ENCODE measurements at regions of chr10 and their contacts with region 1.

Region 1: DNA sequence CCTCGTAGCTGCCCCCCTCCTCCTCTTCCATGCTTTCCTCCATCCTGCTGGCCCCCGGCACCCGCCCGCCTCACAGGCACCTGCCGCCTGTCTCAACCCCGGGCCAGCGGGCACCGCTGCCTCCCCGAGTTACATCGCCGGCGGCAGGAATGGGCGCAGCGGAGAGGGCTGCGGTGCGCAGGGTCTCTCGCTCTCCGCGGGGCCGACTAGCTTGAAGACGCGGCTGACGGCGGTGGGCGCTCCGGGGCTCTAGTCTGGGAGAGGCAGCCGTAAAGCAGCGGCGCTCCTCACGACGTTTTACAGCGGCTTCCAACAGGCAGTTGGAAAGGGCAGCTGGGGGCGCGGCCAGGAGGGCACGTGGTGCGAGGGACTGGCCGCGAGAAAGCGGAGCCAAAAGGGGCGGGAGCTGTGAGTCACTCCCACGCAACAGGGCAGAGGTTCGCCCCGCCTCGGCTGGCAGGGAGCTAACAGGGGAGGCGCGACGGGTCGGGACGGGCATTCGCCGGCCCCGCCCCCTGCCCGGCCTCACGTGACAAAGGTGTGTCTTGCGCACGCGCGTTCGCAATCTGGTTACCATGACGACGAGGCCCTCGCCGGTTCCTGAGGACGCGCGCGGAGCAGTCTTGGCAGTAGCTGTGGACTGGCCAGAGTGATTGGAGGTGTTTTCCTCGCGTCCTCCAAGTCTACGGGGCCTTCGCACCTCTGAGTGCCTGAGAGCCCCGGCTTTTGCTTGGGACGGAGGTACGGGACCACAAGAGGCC is at the start of gene CACUL1:
- DNase-seq: peak; percentile 99
- ATAC-seq: peak; percentile 98
- H3K4me3 Mint-ChIP-seq: peak within 1 kb of the TSS; percentile 91
- H3K27ac Mint-ChIP-seq: peak within 1 kb of the TSS; percentile 78
- H3K4me1 Mint-ChIP-seq: peaks cover 38% of the 10 kb centered on the region
- H3K27me3 Mint-ChIP-seq: peaks cover 3% of the 10 kb centered on the region
- CTCF ChIP-seq: no peak
- total RNA-seq, gene CACUL1: 19.8 and 27.1 TPM in 2 replicates

Region 2: DNA sequence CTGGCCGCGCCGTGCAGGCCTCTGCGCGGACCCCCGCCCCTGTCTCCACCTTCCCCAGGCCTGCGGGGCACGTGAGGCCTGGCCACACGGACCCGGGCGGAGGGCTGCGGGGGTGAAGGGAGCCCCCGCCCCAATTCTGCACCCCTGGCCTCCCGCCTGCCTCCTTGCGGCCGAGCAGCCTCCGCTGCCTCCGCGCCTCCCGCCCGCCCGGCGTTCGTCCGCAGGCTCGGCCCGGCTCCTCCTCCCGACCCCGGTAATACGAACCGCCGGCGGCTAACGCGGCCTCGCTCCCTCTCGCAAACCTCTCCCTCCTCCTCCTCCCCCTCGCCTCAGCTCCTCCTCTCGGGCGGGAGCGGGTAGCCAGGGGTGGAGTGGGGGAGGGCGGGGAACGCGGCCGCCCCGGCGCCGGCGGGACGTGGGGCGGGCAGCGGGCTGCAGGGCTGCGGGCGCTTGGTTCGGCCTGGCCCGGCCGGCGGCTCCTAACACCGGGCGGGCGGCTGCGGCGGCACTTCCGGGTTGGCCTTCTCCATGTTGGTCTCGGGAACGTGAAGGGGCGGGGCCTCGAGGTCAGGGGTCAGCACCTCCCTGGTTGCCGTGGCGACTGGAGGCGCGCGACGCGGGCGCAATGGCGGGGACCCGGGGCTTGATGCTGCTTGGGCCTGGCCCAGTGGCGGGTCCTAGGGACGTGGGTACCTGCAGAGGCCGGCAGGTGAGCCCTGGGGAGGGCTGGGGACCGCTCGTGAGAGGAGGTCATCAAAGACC is 708.3 kb before region 1 on chr10 and contains the start of gene RAB11FIP2:
- CTCF ChIA-PET with region 1: no interaction called
- POLR2A ChIA-PET with region 1: no interaction called
- intact Hi-C with region 1: loop called (anchors 5 kb)
- DNase-seq: peak; percentile 98
- ATAC-seq: peak; percentile 92
- H3K4me3 Mint-ChIP-seq: peak within 1 kb of the TSS; percentile 89
- H3K27ac Mint-ChIP-seq: peak within 1 kb of the TSS; percentile 66
- H3K4me1 Mint-ChIP-seq: peaks cover 38% of the 10 kb centered on the region
- H3K27me3 Mint-ChIP-seq: no peaks in the 10 kb centered on the region
- CTCF ChIP-seq: no peak
- total RNA-seq, gene RAB11FIP2: 20.4 and 33.2 TPM in 2 replicates

Region 3: DNA sequence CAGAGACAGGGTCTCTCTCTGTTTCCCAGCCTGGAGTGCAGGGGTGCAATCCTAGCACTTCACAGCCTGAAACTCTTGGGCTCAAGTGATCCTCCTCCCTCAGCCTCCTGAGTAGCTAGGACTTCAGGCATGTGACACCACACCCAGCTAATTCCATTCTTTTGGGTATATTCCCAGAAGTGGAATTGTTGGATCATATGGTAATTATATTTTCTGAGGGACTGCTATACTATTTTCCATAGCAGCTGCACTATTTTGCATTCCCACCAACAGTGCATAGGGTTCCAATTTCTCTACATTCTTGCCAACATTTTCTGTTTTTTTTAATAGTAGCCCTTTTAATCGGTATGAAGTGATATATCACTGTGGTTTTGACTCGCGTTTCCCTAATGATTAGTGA is 678.2 kb before region 1 on chr10:
- CTCF ChIA-PET with region 1: no interaction called
- POLR2A ChIA-PET with region 1: no interaction called
- intact Hi-C with region 1: no loop called
- DNase-seq: no peak
- ATAC-seq: no peak
- H3K4me3 Mint-ChIP-seq: no peak overlapping the region
- H3K27ac Mint-ChIP-seq: no peak overlapping the region
- H3K4me1 Mint-ChIP-seq: no peaks in the 10 kb centered on the region
- H3K27me3 Mint-ChIP-seq: peaks cover under 1% of the 10 kb centered on the region
- CTCF ChIP-seq: no peak

Region 4: GRCh38 chr10:118698421-118698820 is 56.5 kb before region 1 on chr10:
- CTCF ChIA-PET with region 1: no interaction called
- POLR2A ChIA-PET with region 1: no interaction called
- intact Hi-C with region 1: loop called (anchors 1 kb)
- DNase-seq: no peak
- ATAC-seq: peak; percentile 95
- H3K4me3 Mint-ChIP-seq: no peak overlapping the region
- H3K27ac Mint-ChIP-seq: no peak overlapping the region
- H3K4me1 Mint-ChIP-seq: peaks cover 6% of the 10 kb centered on the region
- H3K27me3 Mint-ChIP-seq: no peaks in the 10 kb centered on the region
- CTCF ChIP-seq: no peak

Region 5: DNA sequence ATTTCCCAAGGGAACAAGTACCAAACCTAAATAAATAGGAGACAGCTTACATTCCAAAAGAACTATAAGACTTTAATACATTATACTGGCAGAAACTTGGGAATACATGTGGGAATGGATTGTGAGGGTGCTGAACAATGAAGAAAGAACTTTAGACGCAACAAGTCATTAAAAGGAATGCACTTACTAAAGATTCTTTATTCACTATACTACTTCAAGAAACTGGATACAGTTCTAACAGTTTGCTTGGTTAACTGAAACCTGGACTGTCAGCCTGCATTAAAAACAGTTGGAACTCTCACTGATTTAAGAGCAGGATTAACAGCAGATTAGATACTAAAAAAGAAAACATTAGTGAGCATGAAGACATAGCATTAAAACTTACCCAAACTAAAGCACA is 12.1 kb before region 1 on chr10:
- CTCF ChIA-PET with region 1: no interaction called
- POLR2A ChIA-PET with region 1: interaction called, 7 read pairs
- intact Hi-C with region 1: loop called (anchors 1 kb)
- DNase-seq: no peak
- ATAC-seq: no peak
- H3K4me3 Mint-ChIP-seq: no peak overlapping the region
- H3K27ac Mint-ChIP-seq: no peak overlapping the region
- H3K4me1 Mint-ChIP-seq: peaks cover 56% of the 10 kb centered on the region
- H3K27me3 Mint-ChIP-seq: no peaks in the 10 kb centered on the region
- CTCF ChIP-seq: no peak

Region 6: GRCh38 chr10:119165171-119166110 is 410.5 kb after region 1 on chr10 and contains the start of gene SFXN4:
- CTCF ChIA-PET with region 1: no interaction called
- POLR2A ChIA-PET with region 1: no interaction called
- intact Hi-C with region 1: loop called (anchors 10 kb)
- DNase-seq: peak; percentile 83
- ATAC-seq: peak; percentile 93
- H3K4me3 Mint-ChIP-seq: peak within 1 kb of the TSS; percentile 92
- H3K27ac Mint-ChIP-seq: peak within 1 kb of the TSS; percentile 88
- H3K4me1 Mint-ChIP-seq: peaks cover 18% of the 10 kb centered on the region
- H3K27me3 Mint-ChIP-seq: no peaks in the 10 kb centered on the region
- CTCF ChIP-seq: no peak
- total RNA-seq, gene SFXN4: 18.4 and 21.7 TPM in 2 replicates

Region 7: GRCh38 chr10:119872860-119873681 is 1118.2 kb after region 1 on chr10:
- CTCF ChIA-PET with region 1: no interaction called
- POLR2A ChIA-PET with region 1: no interaction called
- intact Hi-C with region 1: loop called (anchors 2 kb)
- DNase-seq: peak; percentile 89
- ATAC-seq: peak; percentile 92
- H3K4me3 Mint-ChIP-seq: peak overlapping the region; percentile 88
- H3K27ac Mint-ChIP-seq: peak overlapping the region; percentile 85
- H3K4me1 Mint-ChIP-seq: peaks cover 40% of the 10 kb centered on the region
- H3K27me3 Mint-ChIP-seq: no peaks in the 10 kb centered on the region
- CTCF ChIP-seq: no peak

Measured in activated B cell treated with CpG ODN at 0.5 μM for 24 hours (primary cell).